Activated CD4-positive, alpha-beta memory T cell treated with anti-CD3 and anti-CD28 coated beads for 36 hours (primary cell): ENCODE measurements at regions of chr2 and their contacts with region 1.

Region 1: GRCh38 chr2:195477248-195477995 is 179.6 kb upstream of the SLC39A10 start:
- DNase-seq: no peak
- H3K4me3 Mint-ChIP-seq: no peak overlapping the region
- H3K27ac Mint-ChIP-seq: peak overlapping the region; percentile 10
- H3K4me1 Mint-ChIP-seq: peaks cover 17% of the 10 kb centered on the region
- H3K27me3 Mint-ChIP-seq: no peaks in the 10 kb centered on the region

Region 2: DNA sequence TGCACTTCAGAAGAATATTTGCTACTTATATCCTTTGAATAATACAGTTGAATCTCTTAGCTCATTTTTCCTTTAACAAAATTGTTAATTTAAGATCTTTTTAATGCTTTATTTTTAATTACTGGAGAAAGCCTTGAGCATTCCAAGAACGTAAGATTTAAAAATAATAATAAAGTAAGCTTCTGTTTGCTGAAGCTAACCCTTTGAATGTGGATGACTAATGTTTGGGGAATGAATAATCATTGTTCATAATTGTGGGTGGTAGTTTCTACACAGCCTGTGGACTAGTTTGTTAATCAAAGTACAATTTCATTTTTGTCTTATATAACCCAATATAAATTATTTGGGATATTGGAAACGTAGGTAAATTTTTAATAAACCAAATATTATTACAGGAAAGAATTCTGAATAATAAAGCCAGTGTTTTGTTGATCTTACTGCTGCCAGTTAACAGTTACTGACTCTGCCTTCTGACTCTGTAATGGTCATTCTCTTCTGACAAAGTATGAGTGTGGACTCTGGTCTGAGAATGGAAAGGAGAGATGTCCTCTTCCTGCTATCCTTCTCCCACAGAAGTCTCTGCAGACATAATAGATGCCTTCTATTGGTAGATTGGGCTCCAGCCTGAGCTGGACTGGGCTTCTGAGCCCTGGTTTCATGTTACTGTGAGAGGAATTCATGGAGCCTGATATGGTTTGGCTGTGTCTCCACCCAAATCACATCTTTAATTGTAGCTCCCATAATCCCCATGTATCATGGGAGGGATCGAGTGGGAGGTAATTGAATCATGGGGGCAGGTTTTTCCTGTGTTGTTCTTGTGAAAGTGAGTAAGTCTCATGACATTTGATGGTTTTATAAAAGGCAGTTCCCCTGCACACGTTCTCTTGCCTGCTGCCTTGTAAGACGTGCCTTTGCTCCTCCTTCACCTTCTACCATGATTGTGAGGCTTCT is 113.1 kb before region 1 on chr2:
- CTCF ChIA-PET with region 1: no interaction called
- POLR2A ChIA-PET with region 1: no interaction called
- intact Hi-C with region 1: loop called (anchors 1 kb)
- DNase-seq: no peak
- H3K4me3 Mint-ChIP-seq: no peak overlapping the region
- H3K27ac Mint-ChIP-seq: no peak overlapping the region
- H3K4me1 Mint-ChIP-seq: peaks cover 29% of the 10 kb centered on the region
- H3K27me3 Mint-ChIP-seq: no peaks in the 10 kb centered on the region

Region 3: DNA sequence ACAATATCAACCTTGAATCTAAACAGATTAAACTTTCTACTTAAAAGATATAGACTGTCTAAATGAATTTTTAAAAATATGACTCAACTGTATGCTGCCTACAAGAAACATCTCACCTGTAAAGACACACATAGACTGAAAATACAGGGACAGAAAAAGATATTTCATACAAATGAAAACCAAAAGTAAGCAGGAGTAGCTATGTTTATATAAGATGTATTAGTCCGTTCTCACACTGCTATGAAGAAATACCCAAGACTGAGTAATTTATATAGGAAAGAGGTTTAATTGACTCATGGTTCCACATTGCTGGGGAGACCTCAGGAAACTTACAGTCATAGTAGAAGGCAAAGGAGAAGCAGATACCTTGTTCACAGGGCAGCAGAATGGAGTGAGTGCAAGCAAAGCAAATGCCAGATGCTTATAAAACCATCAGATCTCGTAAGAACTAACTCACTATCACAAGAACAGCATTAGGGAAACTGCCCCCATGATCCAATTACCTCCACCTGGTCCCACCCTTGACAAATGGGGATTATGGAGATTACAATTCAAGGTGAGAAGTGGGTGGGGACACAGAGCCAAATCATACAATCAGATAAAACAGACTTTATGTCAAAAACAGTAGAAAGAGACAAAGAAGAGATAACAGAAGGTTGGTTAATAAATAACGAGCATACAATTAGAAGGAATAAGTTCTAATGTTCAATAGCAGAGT is 34.8 kb before region 1 on chr2:
- CTCF ChIA-PET with region 1: interaction called, 3 read pairs
- POLR2A ChIA-PET with region 1: no interaction called
- intact Hi-C with region 1: loop called (anchors 1 kb)
- DNase-seq: no peak
- H3K4me3 Mint-ChIP-seq: no peak overlapping the region
- H3K27ac Mint-ChIP-seq: peak overlapping the region; percentile 20
- H3K4me1 Mint-ChIP-seq: peaks cover 9% of the 10 kb centered on the region
- H3K27me3 Mint-ChIP-seq: no peaks in the 10 kb centered on the region

Region 4: GRCh38 chr2:195575879-195576401 is 98.5 kb after region 1 on chr2:
- CTCF ChIA-PET with region 1: no interaction called
- POLR2A ChIA-PET with region 1: no interaction called
- intact Hi-C with region 1: no loop called
- DNase-seq: no peak
- H3K4me3 Mint-ChIP-seq: no peak overlapping the region
- H3K27ac Mint-ChIP-seq: peak overlapping the region; percentile 64
- H3K4me1 Mint-ChIP-seq: peaks cover 68% of the 10 kb centered on the region
- H3K27me3 Mint-ChIP-seq: no peaks in the 10 kb centered on the region